ENCODE measurements at regions of chr19 and their contacts with region 1.

Region 1: DNA sequence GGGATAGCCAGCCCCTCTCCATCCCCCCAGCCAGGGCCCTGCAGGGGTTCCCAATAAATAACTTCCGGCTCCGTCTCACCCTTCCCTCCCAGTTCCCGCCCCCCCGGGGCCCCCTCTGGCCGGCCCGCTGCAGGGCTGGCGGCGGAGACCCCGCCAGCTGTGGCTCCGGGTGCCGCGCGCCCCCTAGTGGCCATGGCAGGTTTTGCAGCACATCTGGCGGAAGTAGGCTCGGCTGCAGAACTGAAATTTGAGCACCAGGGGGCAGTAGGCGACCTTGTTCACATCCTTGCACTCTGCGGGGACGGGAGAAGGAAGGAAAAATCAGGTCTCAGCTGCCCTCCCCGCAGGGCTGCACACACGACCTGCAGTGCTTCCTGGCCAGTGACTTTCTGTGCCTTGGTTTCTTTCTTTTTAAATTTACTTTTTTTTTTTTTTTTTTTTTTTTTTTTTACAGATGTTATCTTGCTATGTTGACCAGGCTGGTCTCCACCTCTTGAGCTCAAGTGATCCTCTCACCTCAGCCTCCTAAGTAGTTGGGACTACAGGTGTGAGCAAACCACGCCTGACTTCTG is 3.6 kb upstream of the MYO1F start:
- DNase-seq: peak; percentile 91
- ATAC-seq: peak; percentile 76
- H3K4me3 ChIP-seq: no peak overlapping the region
- H3K4me3 Mint-ChIP-seq: no peak overlapping the region
- H3K27ac ChIP-seq: no peak overlapping the region
- H3K27ac Mint-ChIP-seq: no peak overlapping the region
- H3K4me1 ChIP-seq: peaks cover 27 to 44% of the 10 kb centered on the region in 2 donors
- H3K4me1 Mint-ChIP-seq: peaks cover 29% of the 10 kb centered on the region
- H3K27me3 ChIP-seq: no peaks in the 10 kb centered on the region
- H3K27me3 Mint-ChIP-seq: no peaks in the 10 kb centered on the region
- CTCF ChIP-seq: peak; percentile 99

Region 2: GRCh38 chr19:8355631-8356402 is 225.0 kb before region 1 on chr19:
- CTCF ChIA-PET with region 1: interaction called, 40 read pairs
- POLR2A ChIA-PET with region 1: no interaction called
- intact Hi-C with region 1: loop called (anchors 2 kb)
- DNase-seq: no peak
- ATAC-seq: no peak
- H3K4me3 ChIP-seq: no peak overlapping the region
- H3K4me3 Mint-ChIP-seq: no peak overlapping the region
- H3K27ac ChIP-seq: no peak overlapping the region
- H3K27ac Mint-ChIP-seq: no peak overlapping the region
- H3K4me1 ChIP-seq: peaks cover 0 to 3% of the 10 kb centered on the region in 2 donors
- H3K4me1 Mint-ChIP-seq: peaks cover 3% of the 10 kb centered on the region
- H3K27me3 ChIP-seq: peaks cover 0 to 20% (median 4%) of the 10 kb centered on the region in 4 experiments
- H3K27me3 Mint-ChIP-seq: peaks cover 18% of the 10 kb centered on the region
- CTCF ChIP-seq: no peak

Region 3: DNA sequence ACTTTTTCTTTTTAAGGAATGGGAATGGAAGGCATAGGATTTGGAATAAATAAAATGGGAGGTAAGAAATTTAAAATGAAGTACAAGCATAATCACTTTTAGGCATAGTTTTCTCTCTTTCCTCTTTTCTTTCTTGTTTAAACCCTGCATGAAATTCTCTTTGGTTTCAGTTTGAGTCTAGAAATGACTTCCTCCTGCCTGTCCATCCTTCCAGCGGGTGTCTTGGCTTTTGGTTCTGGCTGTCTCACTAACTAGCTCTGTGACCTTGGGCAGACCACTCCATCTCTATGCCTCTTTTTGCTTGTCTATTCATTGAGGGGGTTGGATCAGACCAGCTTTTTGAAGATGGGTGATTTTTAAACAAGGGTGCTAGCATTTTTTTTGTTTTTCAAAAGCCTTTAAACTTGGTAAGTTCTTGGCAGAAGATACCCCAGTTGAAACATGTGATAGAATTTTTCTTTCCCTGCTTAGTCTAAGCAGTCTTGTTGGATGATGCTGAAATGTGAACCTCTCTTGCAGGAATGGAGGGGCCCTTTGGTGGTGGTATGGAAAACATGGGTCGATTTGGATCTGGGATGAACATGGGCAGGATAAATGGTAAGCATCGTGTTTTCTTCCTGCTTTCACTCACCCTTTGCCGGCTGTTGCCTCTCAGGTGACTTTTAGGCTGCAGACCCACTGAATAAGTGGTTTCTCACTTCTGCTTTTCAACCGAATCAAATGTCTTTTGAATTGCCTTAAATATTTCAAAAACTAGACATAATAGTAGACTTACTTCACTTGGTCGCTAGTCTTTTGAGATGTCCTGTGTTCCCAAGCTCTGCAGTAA is 106.9 kb before region 1 on chr19:
- CTCF ChIA-PET with region 1: interaction called, 10 read pairs
- POLR2A ChIA-PET with region 1: no interaction called
- intact Hi-C with region 1: no loop called
- DNase-seq: peak; percentile 79
- ATAC-seq: peak; percentile 84
- H3K4me3 ChIP-seq: peak overlapping the region in 2 of 5 experiments; percentile 0 to 7
- H3K4me3 Mint-ChIP-seq: peak overlapping the region; percentile 71
- H3K27ac ChIP-seq: peak overlapping the region; percentile 56 to 77
- H3K27ac Mint-ChIP-seq: peak overlapping the region; percentile 88
- H3K4me1 ChIP-seq: peaks cover 34 to 45% of the 10 kb centered on the region in 2 donors
- H3K4me1 Mint-ChIP-seq: peaks cover 50% of the 10 kb centered on the region
- H3K27me3 ChIP-seq: no peaks in the 10 kb centered on the region
- H3K27me3 Mint-ChIP-seq: no peaks in the 10 kb centered on the region
- CTCF ChIP-seq: no peak

Region 4: GRCh38 chr19:8513687-8514504 is 66.9 kb before region 1 on chr19 and contains the start of gene ZNF414:
- CTCF ChIA-PET with region 1: interaction called, 70 read pairs
- POLR2A ChIA-PET with region 1: interaction called, 26 read pairs
- intact Hi-C with region 1: loop called (anchors 2 kb)
- DNase-seq: peak; percentile 99
- ATAC-seq: peak; percentile 91
- H3K4me3 ChIP-seq: peak within 1 kb of the TSS; percentile 46 to 80 (median 74)
- H3K4me3 Mint-ChIP-seq: peak within 1 kb of the TSS; percentile 93
- H3K27ac ChIP-seq: peak within 1 kb of the TSS; percentile 87 to 97
- H3K27ac Mint-ChIP-seq: peak within 1 kb of the TSS; percentile 98
- H3K4me1 ChIP-seq: peaks cover 17 to 36% of the 10 kb centered on the region in 2 donors
- H3K4me1 Mint-ChIP-seq: peaks cover 26% of the 10 kb centered on the region
- H3K27me3 ChIP-seq: no peaks in the 10 kb centered on the region
- H3K27me3 Mint-ChIP-seq: no peaks in the 10 kb centered on the region
- CTCF ChIP-seq: no peak
- total RNA-seq, gene ZNF414: 40.7 and 43.8 TPM in 2 replicates

Region 5: GRCh38 chr19:8569066-8569771 is 11.6 kb before region 1 on chr19:
- CTCF ChIA-PET with region 1: interaction called, 95 read pairs
- POLR2A ChIA-PET with region 1: interaction called, 6 read pairs
- intact Hi-C with region 1: loop called (anchors 1 kb)
- DNase-seq: peak; percentile 44
- ATAC-seq: peak; percentile 90
- H3K4me3 ChIP-seq: peak overlapping the region in 1 of 5 experiments; percentile 30
- H3K4me3 Mint-ChIP-seq: peak overlapping the region; percentile 73
- H3K27ac ChIP-seq: peak overlapping the region; percentile 38 to 56
- H3K27ac Mint-ChIP-seq: peak overlapping the region; percentile 86
- H3K4me1 ChIP-seq: peaks cover 20 to 30% of the 10 kb centered on the region in 2 donors
- H3K4me1 Mint-ChIP-seq: peaks cover 52% of the 10 kb centered on the region
- H3K27me3 ChIP-seq: no peaks in the 10 kb centered on the region
- H3K27me3 Mint-ChIP-seq: no peaks in the 10 kb centered on the region
- CTCF ChIP-seq: no peak

Region 6: DNA sequence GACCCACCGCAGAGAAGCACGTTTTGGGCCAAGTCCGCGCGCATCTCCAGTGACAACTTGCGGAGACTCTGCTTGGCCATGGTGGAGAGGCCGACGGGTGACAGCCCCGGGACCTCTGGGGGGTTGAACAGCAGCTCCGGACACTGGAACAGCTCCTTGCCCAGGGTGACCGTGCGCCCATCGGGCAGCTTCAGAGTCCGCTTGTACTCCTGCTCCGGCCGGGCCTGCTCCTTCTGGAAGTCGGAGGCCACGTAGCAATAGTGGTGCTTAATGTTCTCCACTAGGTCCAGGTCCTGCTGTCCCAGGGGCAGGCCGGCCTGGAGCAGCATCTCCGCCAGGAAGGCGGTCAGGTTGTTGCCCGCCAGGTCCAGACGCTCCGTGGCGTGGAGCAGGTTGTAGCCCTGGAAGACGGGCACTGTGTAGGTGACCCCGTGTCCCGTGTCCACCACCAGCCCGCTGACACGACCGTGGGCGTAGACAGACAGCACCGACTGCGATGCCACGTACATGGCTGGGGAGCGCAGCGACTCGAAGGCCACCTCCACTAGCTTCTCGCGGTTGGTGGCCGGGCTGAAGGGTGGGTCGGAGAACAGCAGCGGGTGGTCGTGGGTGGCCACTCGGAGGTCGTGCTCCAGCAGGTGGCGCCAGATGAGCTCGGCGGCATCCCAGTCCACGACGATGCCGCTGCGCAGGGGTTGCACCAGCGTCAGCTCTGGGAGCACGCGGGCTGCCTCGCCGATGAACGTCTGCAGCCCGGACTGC is 117.1 kb after region 1 on chr19:
- CTCF ChIA-PET with region 1: interaction called, 24 read pairs
- POLR2A ChIA-PET with region 1: no interaction called
- intact Hi-C with region 1: loop called (anchors 5 kb)
- DNase-seq: no peak
- ATAC-seq: no peak
- H3K4me3 ChIP-seq: no peak overlapping the region
- H3K4me3 Mint-ChIP-seq: no peak overlapping the region
- H3K27ac ChIP-seq: no peak overlapping the region
- H3K27ac Mint-ChIP-seq: no peak overlapping the region
- H3K4me1 ChIP-seq: peaks cover 0 to 5% of the 10 kb centered on the region in 2 donors
- H3K4me1 Mint-ChIP-seq: peaks cover 6% of the 10 kb centered on the region
- H3K27me3 ChIP-seq: peaks cover 0 to 17% (median 5%) of the 10 kb centered on the region in 4 experiments
- H3K27me3 Mint-ChIP-seq: peaks cover 47% of the 10 kb centered on the region
- CTCF ChIP-seq: no peak

Region 7: DNA sequence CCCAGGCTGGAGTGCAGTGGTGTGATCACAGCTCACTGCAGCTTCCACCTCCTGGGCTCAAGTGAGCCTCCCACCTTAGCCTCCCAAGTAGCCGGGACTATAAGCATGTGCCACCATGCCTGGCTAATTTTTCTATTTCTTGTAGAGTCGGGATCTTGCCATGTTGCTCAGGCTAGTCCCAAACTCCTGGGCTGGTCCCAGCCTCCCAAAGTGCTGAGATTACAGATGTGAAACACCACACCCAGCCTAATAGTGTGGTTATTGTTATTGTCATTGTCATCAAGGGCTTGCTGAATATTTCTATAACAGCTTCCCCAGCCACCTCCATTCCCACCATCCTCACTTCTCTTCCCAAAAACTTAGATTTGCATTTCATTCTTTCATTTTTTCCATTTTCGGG is 143.5 kb after region 1 on chr19:
- CTCF ChIA-PET with region 1: no interaction called
- POLR2A ChIA-PET with region 1: no interaction called
- intact Hi-C with region 1: no loop called
- DNase-seq: no peak
- ATAC-seq: no peak
- H3K4me3 ChIP-seq: no peak overlapping the region
- H3K4me3 Mint-ChIP-seq: no peak overlapping the region
- H3K27ac ChIP-seq: no peak overlapping the region
- H3K27ac Mint-ChIP-seq: no peak overlapping the region
- H3K4me1 ChIP-seq: no peaks in the 10 kb centered on the region
- H3K4me1 Mint-ChIP-seq: no peaks in the 10 kb centered on the region
- H3K27me3 ChIP-seq: peaks cover 0 to 3% (median 0%) of the 10 kb centered on the region in 4 experiments
- H3K27me3 Mint-ChIP-seq: peaks cover 11% of the 10 kb centered on the region
- CTCF ChIP-seq: no peak

Region 8: DNA sequence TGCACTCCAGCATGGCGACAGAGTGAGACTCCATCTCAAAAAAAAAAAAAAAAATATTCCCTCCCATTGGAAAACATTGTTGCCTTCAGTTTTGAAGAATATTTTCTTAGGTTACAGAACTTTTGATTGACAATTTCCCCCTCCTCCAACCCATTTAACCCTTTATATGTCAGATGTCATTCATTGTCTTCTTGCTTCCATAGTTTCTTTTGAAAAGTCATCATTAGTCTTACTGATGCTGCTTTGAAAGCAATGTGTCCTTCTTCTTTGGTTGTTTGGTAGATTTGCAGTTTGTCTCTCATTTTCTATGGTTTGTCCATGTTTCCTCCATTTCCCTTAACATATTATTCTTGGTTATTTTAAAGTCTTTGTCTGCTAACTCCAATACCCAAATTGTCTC is 225.9 kb after region 1 on chr19:
- CTCF ChIA-PET with region 1: no interaction called
- POLR2A ChIA-PET with region 1: no interaction called
- intact Hi-C with region 1: no loop called
- DNase-seq: no peak
- ATAC-seq: no peak
- H3K4me3 ChIP-seq: peak overlapping the region in 1 of 5 experiments; percentile 7
- H3K4me3 Mint-ChIP-seq: no peak overlapping the region
- H3K27ac ChIP-seq: no peak overlapping the region
- H3K27ac Mint-ChIP-seq: no peak overlapping the region
- H3K4me1 ChIP-seq: no peaks in the 10 kb centered on the region
- H3K4me1 Mint-ChIP-seq: no peaks in the 10 kb centered on the region
- H3K27me3 ChIP-seq: no peaks in the 10 kb centered on the region
- H3K27me3 Mint-ChIP-seq: no peaks in the 10 kb centered on the region
- CTCF ChIP-seq: no peak

Region 9: DNA sequence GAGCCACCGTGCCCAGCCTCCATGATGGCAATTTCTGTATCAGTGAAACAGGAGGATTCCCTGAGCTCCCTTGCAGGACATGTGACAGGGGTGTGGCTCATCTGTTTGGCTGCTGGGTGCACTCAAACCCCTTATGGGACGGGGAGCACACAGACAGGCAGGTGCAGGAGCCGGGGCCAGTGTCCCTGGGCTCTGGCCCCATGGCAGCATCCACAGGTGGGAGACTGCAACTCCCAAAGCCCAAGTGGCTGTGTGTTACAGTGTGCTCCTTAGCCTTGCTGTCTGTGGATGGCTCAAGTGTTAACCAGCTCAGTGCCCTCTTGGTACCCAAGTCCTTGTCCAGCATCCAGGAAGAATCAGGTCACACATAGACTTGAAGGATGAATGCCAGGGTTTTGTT is 266.0 kb after region 1 on chr19:
- CTCF ChIA-PET with region 1: no interaction called
- POLR2A ChIA-PET with region 1: no interaction called
- intact Hi-C with region 1: no loop called
- DNase-seq: no peak
- ATAC-seq: no peak
- H3K4me3 ChIP-seq: no peak overlapping the region
- H3K4me3 Mint-ChIP-seq: no peak overlapping the region
- H3K27ac ChIP-seq: no peak overlapping the region
- H3K27ac Mint-ChIP-seq: no peak overlapping the region
- H3K4me1 ChIP-seq: no peaks in the 10 kb centered on the region
- H3K4me1 Mint-ChIP-seq: no peaks in the 10 kb centered on the region
- H3K27me3 ChIP-seq: no peaks in the 10 kb centered on the region
- H3K27me3 Mint-ChIP-seq: peaks cover 12% of the 10 kb centered on the region
- CTCF ChIP-seq: no peak